Common myeloid progenitor, CD34-positive (primary cell): ENCODE measurements at regions of chr3 and their contacts with region 1.

Region 1: DNA sequence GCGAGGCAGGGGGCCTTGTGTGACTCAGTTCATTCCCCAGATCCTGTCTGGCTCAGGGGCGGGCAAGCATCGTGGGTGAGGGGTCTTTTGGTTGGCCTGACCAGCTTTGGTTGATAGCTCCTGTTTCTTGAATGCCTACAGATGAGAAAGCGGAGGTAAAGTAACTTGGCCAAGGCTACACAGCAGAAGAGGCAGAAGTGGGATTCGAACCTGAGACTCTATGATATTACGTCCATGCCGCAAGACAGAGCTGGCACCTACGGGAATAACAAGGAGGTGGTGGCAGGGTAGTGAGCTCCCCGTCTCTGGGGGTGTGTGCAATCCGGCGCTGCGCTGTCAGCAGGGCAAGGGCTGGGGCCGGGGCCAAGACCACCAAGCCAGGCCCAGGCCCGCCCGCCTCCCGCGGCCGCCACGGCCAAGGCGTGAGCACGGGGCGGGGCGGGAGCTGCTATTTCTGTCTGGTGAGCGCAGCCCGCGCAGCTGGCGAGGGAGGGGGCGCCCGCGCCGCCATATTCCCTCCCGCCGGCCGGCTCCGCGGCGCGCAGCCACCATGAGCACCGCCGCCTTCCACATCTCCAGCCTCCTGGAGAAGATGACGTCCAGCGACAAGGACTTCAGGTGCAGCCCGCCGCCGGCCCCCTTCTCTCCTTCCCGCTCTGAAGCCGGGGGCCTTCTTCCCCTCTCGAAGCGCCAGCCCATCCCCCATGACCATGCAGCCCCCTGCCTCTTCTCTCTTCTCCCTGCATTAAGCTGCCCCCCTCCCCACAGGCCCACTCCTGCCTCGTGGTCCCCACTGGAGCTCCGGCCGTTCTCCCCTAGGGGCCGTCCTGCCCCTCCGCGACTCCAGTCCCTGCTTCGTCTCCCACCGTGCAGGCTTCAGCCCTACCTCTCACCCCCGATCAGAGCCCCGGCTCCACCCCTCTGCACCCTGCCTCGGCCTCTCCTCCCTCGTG is at the start of gene CAND2:
- DNase-seq: peak; percentile 40 to 63 (median 56)
- H3K4me3 ChIP-seq: peak within 1 kb of the TSS; percentile 55 to 78 (median 72)
- H3K27ac ChIP-seq: no peak within 1 kb of the TSS
- H3K4me1 ChIP-seq: peaks cover 0 to 12% (median 8%) of the 10 kb centered on the region in 4 experiments
- H3K27me3 ChIP-seq: peaks cover 0 to 6% (median 0%) of the 10 kb centered on the region in 5 experiments

Region 2: GRCh38 chr3:12522721-12523120 is 273.7 kb before region 1 on chr3:
- CTCF ChIA-PET with region 1: no interaction called
- POLR2A ChIA-PET with region 1: no interaction called
- DNase-seq: no peak
- H3K4me3 ChIP-seq: no peak overlapping the region
- H3K27ac ChIP-seq: no peak overlapping the region
- H3K4me1 ChIP-seq: no peaks in the 10 kb centered on the region
- H3K27me3 ChIP-seq: no peaks in the 10 kb centered on the region

Region 3: DNA sequence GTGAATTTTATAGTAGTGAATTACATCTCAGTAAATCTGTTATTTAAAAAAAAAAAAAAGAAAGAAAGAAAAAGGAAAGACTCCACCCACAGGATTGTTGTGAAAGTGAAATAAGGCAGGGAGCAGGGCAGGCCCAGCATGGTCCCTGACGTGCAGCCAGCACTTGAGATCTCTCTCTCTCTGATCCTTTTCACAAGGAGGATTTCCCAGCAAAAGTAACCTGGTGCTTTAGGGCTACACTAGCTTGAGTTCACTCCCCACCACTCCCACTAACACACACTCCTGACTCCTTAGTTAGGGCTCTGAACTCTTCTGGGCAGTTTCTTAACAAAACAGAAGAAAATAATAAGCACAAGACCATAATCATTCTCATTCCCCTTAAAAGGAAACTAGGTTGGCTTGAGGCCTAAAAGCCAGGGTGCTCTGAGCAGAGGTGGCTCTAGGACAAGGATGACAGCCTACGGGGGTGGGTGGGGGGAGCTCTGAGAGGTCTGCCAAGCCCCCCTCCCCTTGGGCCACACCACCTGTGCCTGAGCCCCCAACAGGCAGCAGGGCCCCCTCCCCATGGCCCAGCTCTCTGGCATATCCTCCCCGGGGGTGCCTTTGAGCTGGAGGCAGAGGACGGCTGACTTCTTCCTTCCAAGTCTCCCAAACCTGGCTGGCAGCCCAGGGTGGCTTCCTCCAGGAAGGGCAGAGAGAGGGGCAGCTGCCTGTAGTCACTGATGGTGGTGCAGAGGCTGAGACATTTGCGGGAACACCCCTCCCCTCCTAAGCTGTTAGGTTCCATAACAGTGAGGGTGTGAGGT is 38.2 kb before region 1 on chr3:
- CTCF ChIA-PET with region 1: no interaction called
- POLR2A ChIA-PET with region 1: no interaction called
- DNase-seq: peak in 2 of 3 donors; percentile 50 to 57
- H3K4me3 ChIP-seq: peak overlapping the region in 1 of 7 experiments; percentile 6
- H3K27ac ChIP-seq: peak overlapping the region in 1 of 2 experiments; percentile 29
- H3K4me1 ChIP-seq: peaks cover 0 to 20% (median 9%) of the 10 kb centered on the region in 4 experiments
- H3K27me3 ChIP-seq: no peaks in the 10 kb centered on the region

Region 4: GRCh38 chr3:12782172-12782815 is 14.2 kb before region 1 on chr3:
- CTCF ChIA-PET with region 1: interaction called, 11 read pairs
- POLR2A ChIA-PET with region 1: no interaction called
- DNase-seq: peak in 1 of 3 donors; percentile 21
- H3K4me3 ChIP-seq: no peak overlapping the region
- H3K27ac ChIP-seq: no peak overlapping the region
- H3K4me1 ChIP-seq: no peaks in the 10 kb centered on the region
- H3K27me3 ChIP-seq: peaks cover 0 to 3% (median 0%) of the 10 kb centered on the region in 5 experiments